Mammary epithelial cell (primary cell): ENCODE measurements at regions of chr9 and their contacts with region 1.

Region 1: GRCh38 chr9:32807217-32807616 is 23.9 kb downstream of the TMEM215 start:
- DNase-seq: no peak
- H3K4me3 ChIP-seq: no peak overlapping the region
- H3K27ac ChIP-seq: no peak overlapping the region
- H3K4me1 ChIP-seq: no peaks in the 10 kb centered on the region
- H3K27me3 ChIP-seq: no peaks in the 10 kb centered on the region
- CTCF ChIP-seq: no peak

Region 2: DNA sequence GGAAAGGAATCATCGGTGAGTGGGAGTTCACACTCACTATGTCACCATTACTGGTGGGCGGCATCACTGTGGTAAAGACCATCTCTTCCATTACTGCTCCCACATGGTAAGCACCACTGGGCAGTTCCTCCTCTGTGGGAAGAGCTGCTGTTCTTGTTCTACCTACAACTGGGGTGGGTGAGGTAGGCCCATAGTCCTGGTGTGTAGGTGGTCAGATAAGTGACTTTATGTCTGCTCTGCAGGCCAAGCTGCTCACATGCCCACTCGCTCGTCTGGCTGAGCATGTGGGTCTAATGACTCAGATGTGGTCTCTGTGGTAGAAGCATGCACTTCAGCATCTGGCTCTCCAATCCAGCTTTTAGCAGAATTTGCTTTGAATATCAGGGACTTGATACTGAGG is 59.1 kb after region 1 on chr9:
- CTCF ChIA-PET with region 1: no interaction called
- dilution Hi-C with region 1: loop called (anchors 5 kb)
- in situ Hi-C with region 1: no loop called
- intact Hi-C with region 1: no loop called
- DNase-seq: no peak
- H3K4me3 ChIP-seq: no peak overlapping the region
- H3K27ac ChIP-seq: no peak overlapping the region
- H3K4me1 ChIP-seq: no peaks in the 10 kb centered on the region
- H3K27me3 ChIP-seq: no peaks in the 10 kb centered on the region
- CTCF ChIP-seq: no peak